GM13977 (cell line): ENCODE measurements at regions of chr10 and their contacts with region 1.

Region 1: DNA sequence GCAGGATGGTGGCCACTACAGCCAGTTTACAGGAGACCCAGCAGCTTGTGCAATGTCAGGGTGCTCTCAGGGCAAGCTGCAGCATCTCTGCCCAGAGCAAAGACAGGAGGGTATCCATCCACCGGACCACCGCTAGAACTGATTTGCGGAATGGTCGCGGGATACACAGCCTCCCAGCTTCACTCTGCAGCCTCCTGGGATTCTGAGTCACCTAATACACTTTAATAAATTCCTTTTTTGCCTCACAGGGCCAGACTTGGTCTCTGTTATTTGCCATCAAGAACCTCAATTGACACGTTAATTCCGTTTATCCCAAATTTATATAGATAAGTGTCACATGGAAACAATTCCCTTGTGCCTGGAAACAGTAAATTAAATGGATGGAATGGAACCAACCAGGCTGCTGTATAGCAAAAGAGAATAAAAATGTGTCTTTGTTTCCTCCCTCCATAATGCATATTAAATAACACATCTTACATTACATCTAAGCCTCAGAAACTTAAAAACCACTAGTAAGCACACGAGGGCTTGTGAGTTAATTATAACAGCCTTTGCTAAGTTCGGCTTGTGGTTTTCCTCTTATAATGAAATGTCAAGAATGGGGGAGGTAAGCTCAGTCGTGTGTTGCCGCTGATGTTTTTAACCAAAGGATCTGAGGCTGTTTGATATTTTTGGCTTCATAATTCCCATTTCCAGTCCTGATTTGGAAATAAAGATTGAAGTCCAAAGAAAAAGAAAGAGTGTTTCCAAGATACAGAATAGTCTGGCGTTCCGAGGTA is 52.1 kb downstream of the ADRB1 start:
- DNase-seq: peak; percentile 65
- CTCF ChIP-seq: no peak

Region 2: GRCh38 chr10:113808168-113808567 is 287.6 kb before region 1 on chr10:
- in situ Hi-C with region 1: loop called (anchors 5 kb)
- DNase-seq: peak; percentile 19
- CTCF ChIP-seq: no peak

Region 3: GRCh38 chr10:114043532-114044246 is 52.1 kb before region 1 on chr10 and contains the start of gene ADRB1:
- in situ Hi-C with region 1: loop called (anchors 10 kb)
- DNase-seq: peak; percentile 89
- CTCF ChIP-seq: no peak